ENCODE measurements at regions of chr7 and their contacts with region 1.

Region 1: GRCh38 chr7:102425639-102426267 is 7.6 kb upstream of the ORAI2 start:
- DNase-seq: peak; percentile 72 to 96 (median 87)
- ATAC-seq: peak; percentile 78
- H3K4me3 ChIP-seq: peak overlapping the region; percentile 34 to 43
- H3K4me3 Mint-ChIP-seq: peak overlapping the region; percentile 80
- H3K27ac ChIP-seq: peak overlapping the region; percentile 99
- H3K27ac Mint-ChIP-seq: peak overlapping the region; percentile 100
- H3K4me1 ChIP-seq: peaks cover 82% of the 10 kb centered on the region
- H3K4me1 Mint-ChIP-seq: peaks cover 77% of the 10 kb centered on the region
- H3K27me3 ChIP-seq: no peaks in the 10 kb centered on the region
- H3K27me3 Mint-ChIP-seq: no peaks in the 10 kb centered on the region
- CTCF ChIP-seq: no peak

Region 2: DNA sequence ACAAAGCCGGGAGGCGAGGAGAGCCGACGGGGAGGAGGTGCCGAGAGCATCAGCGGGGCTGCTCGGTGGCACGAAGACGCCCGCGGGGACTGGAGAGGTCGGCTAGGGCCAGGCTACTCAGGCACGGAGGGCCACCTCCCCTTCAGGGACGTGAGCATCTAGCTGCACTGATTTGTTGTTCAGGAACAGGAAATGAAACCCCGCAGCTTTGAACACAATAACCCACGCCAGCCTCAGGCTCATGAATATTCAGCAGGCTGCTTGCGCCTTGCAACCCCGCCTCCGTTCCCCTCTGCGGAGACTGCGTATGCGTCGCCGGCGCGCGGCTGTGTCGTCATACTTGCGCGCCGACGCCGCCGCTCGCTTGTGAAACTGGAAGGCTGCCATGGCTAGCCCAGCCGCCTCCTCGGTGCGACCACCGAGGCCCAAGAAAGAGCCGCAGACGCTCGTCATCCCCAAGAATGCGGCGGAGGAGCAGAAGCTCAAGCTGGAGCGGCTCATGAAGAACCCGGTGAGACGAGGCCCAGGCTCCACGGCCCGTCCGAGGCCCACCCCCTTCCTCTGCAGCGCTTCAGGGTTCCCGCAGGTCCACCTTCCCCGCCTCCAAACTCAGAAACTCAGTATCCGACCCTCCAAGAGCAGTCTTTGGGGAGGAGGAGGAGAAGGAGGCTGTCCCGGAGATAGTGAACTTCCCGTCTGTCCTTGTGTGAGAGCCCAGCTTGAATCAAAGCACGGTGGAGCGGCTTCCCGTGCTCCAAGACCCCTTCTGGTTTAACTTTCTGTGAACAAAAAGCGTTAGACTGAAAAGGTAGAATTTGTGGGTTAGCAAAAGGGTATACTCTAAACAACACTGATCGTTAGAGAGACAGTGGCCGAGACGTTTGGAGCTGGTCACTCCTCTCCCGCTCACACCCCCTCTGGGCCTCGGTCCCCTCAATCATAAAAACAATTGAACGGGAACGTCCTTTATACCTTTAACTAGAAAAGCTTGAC is 29.4 kb before region 1 on chr7 and contains the start of gene PRKRIP1:
- CTCF ChIA-PET with region 1: interaction called, 3 read pairs
- POLR2A ChIA-PET with region 1: interaction called, 18 read pairs
- intact Hi-C with region 1: loop called in 1 of 2 experiments (anchors 5 kb)
- DNase-seq: peak; percentile 68 to 97 (median 84)
- ATAC-seq: peak; percentile 96
- H3K4me3 ChIP-seq: peak within 1 kb of the TSS; percentile 84 to 92
- H3K4me3 Mint-ChIP-seq: peak within 1 kb of the TSS; percentile 96
- H3K27ac ChIP-seq: peak within 1 kb of the TSS; percentile 82 to 84
- H3K27ac Mint-ChIP-seq: peak within 1 kb of the TSS; percentile 97
- H3K4me1 ChIP-seq: peaks cover 13% of the 10 kb centered on the region
- H3K4me1 Mint-ChIP-seq: peaks cover 26% of the 10 kb centered on the region
- H3K27me3 ChIP-seq: no peaks in the 10 kb centered on the region
- H3K27me3 Mint-ChIP-seq: no peaks in the 10 kb centered on the region
- CTCF ChIP-seq: no peak
- total RNA-seq, gene PRKRIP1: 51.1 to 57.2 TPM

Region 3: GRCh38 chr7:102404005-102404861 is 21.5 kb before region 1 on chr7:
- CTCF ChIA-PET with region 1: interaction called, 10 read pairs
- POLR2A ChIA-PET with region 1: interaction called, 4 read pairs
- intact Hi-C with region 1: loop called in 1 of 2 experiments (anchors 5 kb)
- DNase-seq: peak in 7 of 9 experiments; percentile 32 to 83 (median 56)
- ATAC-seq: peak; percentile 100
- H3K4me3 ChIP-seq: no peak overlapping the region
- H3K4me3 Mint-ChIP-seq: no peak overlapping the region
- H3K27ac ChIP-seq: no peak overlapping the region
- H3K27ac Mint-ChIP-seq: no peak overlapping the region
- H3K4me1 ChIP-seq: no peaks in the 10 kb centered on the region
- H3K4me1 Mint-ChIP-seq: peaks cover 13% of the 10 kb centered on the region
- H3K27me3 ChIP-seq: no peaks in the 10 kb centered on the region
- H3K27me3 Mint-ChIP-seq: no peaks in the 10 kb centered on the region
- CTCF ChIP-seq: peak; percentile 75

Region 4: GRCh38 chr7:102412548-102412947 is 13.2 kb before region 1 on chr7:
- CTCF ChIA-PET with region 1: interaction called, 14 read pairs
- POLR2A ChIA-PET with region 1: interaction called, 48 read pairs
- intact Hi-C with region 1: loop called in 1 of 2 experiments (anchors 1 kb)
- DNase-seq: peak in 7 of 9 experiments; percentile 38 to 71 (median 62)
- ATAC-seq: peak; percentile 32
- H3K4me3 ChIP-seq: no peak overlapping the region
- H3K4me3 Mint-ChIP-seq: no peak overlapping the region
- H3K27ac ChIP-seq: no peak overlapping the region
- H3K27ac Mint-ChIP-seq: no peak overlapping the region
- H3K4me1 ChIP-seq: peaks cover 37% of the 10 kb centered on the region
- H3K4me1 Mint-ChIP-seq: peaks cover 40% of the 10 kb centered on the region
- H3K27me3 ChIP-seq: no peaks in the 10 kb centered on the region
- H3K27me3 Mint-ChIP-seq: no peaks in the 10 kb centered on the region
- CTCF ChIP-seq: peak; percentile 66

Region 5: DNA sequence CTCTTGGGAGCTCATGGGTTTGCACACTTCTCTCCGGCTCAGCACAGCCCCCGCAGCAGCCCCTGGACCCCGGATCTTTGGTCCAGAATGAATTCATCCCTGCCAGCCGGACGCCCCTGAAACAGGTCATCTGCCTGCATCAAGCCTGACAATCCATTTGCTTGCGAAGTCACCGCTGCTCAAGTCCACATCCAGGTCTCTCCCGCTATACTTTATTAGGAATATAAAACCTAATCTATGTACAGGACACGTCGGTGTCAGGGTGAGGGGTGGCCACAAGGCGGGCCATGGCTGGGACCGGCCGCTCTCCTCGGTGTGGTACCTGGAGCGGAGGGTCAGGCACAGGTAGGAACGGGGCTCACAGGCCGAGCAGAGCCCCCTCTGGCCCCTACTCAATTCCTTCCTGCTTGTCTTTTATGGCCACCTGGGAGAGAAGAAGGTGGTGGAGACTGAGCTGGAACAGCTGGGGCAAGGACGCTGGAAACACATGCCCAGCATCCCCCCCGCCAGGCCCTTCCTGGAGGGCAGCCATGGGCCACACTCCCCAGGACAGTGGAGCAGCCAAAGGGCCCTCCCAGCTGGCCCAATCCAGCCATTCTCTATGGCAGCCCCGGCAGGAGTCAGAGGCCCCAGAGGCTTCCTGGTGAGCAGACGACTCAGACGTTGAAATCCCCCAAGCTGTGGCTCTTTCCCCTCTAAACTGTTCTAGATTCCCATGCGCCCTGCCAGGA is 47.7 kb after region 1 on chr7:
- CTCF ChIA-PET with region 1: no interaction called
- POLR2A ChIA-PET with region 1: no interaction called
- intact Hi-C with region 1: no loop called
- DNase-seq: peak in 1 of 9 experiments; percentile 18
- ATAC-seq: no peak
- H3K4me3 ChIP-seq: no peak overlapping the region
- H3K4me3 Mint-ChIP-seq: no peak overlapping the region
- H3K27ac ChIP-seq: no peak overlapping the region
- H3K27ac Mint-ChIP-seq: no peak overlapping the region
- H3K4me1 ChIP-seq: no peaks in the 10 kb centered on the region
- H3K4me1 Mint-ChIP-seq: no peaks in the 10 kb centered on the region
- H3K27me3 ChIP-seq: no peaks in the 10 kb centered on the region
- H3K27me3 Mint-ChIP-seq: no peaks in the 10 kb centered on the region
- CTCF ChIP-seq: no peak